AG04450 (cell line): ENCODE measurements at regions of chr7 and their contacts with region 1.

Region 1: GRCh38 chr7:100132697-100133151 is 6.0 kb downstream of the MBLAC1 start:
- DNase-seq: no peak
- H3K4me3 ChIP-seq: no peak overlapping the region
- H3K27ac ChIP-seq: no peak overlapping the region
- H3K27me3 ChIP-seq: no peaks in the 10 kb centered on the region
- CTCF ChIP-seq: peak; percentile 98

Region 2: GRCh38 chr7:99928994-99929729 is 203.6 kb before region 1 on chr7 and contains the start of gene GJC3:
- CTCF ChIA-PET with region 1: no interaction called
- POLR2A ChIA-PET with region 1: no interaction called
- DNase-seq: no peak
- H3K4me3 ChIP-seq: peak within 1 kb of the TSS; percentile 31
- H3K27ac ChIP-seq: no peak within 1 kb of the TSS
- H3K27me3 ChIP-seq: peaks cover 14% of the 10 kb centered on the region
- CTCF ChIP-seq: peak; percentile 29
- polyA plus RNA-seq, gene GJC3: not detected in 2 replicates

Region 3: DNA sequence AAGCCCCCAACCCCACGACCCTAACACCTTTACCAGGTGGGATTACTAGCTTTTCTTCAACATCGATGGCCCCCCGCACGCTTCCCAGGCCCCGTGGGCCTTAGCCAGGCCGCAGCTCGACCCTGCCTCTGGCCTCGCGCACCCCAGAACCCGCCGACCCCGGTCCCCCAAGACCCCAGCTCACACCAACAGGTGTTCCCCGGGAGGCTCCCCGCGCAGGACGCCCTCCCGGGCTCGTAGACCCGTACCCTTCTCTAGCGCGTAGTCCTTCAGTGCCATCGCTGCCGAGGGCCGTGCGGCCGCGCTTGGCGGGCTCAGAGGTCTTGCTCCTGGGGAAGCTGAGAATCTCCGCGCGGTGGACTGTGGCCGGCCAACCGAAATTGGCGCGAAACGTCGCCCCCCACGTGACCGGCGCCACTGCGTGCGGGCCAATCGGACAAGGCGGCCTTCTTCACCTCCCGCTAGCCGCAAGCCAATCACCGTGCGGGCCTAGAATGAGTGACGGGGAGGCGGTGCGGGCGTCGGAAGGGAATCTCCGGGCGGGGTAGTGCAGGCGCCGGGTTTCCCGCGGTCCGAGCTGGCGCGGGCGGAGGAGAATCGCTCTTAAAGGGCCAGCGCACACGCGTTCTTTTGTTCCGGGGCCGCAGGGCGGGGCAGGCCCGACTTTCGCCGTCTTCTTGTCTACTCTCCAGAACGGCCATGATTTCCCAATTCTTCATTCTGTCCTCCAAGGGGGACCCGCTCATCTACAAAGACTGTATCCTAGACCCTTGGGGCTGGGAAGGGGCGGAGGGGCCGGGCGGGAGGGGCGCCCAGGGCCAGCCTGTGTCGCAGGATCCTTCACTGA is 31.5 kb before region 1 on chr7 and contains the starts of genes AP4M1 and MCM7:
- CTCF ChIA-PET with region 1: interaction called, 13 read pairs
- POLR2A ChIA-PET with region 1: interaction called, 4 read pairs
- DNase-seq: peak; percentile 98
- H3K4me3 ChIP-seq: peak within 1 kb of the TSS; percentile 77
- H3K27ac ChIP-seq: peak within 1 kb of the TSS; percentile 88
- H3K27me3 ChIP-seq: no peaks in the 10 kb centered on the region
- CTCF ChIP-seq: no peak
- polyA plus RNA-seq, gene AP4M1: 25.4 and 26.1 TPM in 2 replicates
- polyA plus RNA-seq, gene MCM7: 39.5 and 44.2 TPM in 2 replicates

Region 4: GRCh38 chr7:100148225-100148558 is 15.5 kb after region 1 on chr7:
- CTCF ChIA-PET with region 1: interaction called, 32 read pairs
- POLR2A ChIA-PET with region 1: interaction called, 4 read pairs
- DNase-seq: no peak
- H3K4me3 ChIP-seq: peak overlapping the region; percentile 43
- H3K27ac ChIP-seq: no peak overlapping the region
- H3K27me3 ChIP-seq: no peaks in the 10 kb centered on the region
- CTCF ChIP-seq: no peak

Region 5: DNA sequence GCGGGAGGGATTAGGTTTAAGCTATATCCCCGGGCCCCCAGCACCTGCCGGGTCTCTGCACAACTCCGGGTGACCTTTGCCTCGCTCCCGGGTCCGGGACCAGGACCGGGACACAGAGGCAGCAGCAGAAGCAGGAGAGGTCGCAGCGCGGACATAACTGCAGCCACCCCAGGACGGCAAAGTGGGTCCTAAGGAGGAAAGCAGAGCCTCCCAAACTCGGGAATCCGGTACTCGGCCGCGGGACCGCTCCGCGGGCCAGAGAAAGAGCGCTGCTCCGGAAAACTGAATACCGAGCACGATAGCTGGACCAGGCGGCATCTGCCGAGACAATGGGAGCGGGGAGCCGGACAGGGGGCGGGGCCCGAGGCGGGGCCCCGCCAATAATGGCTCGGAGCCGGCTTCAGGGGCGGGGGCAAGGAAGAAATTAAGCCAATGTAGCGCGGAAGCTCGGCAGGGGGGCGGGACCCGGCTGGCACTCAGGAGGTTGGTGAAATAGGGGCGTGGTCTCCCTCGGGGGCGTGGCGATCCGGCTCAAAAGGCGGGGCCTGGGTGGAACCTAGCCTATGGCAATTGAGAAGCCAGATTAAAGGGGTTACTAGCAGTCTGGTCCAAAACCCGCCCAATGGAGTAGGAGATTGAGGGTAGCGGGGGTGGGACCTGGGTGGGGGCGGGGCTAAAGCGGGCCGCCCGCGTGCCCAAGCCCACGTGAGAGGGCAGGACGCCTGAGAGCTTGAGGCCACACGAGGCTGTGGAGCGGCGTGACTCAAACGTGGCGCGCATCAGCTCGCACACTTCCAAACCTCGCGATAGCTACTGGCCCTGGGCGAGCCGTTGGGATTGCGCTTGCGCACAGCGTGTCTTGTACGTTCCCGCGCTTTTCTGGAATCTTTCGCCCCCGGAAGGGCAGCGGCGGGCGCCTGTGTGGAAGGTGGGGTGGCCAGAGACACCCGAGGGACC is 44.6 kb after region 1 on chr7 and contains the starts of genes GPC2 and STAG3:
- CTCF ChIA-PET with region 1: interaction called, 11 read pairs
- POLR2A ChIA-PET with region 1: no interaction called
- DNase-seq: peak; percentile 91
- H3K4me3 ChIP-seq: peak within 1 kb of the TSS; percentile 92
- H3K27ac ChIP-seq: no peak within 1 kb of the TSS
- H3K27me3 ChIP-seq: no peaks in the 10 kb centered on the region
- CTCF ChIP-seq: no peak
- polyA plus RNA-seq, gene GPC2: 2.6 TPM in 2 replicates
- polyA plus RNA-seq, gene STAG3: 0.15 and 0.22 TPM in 2 replicates

Region 6: DNA sequence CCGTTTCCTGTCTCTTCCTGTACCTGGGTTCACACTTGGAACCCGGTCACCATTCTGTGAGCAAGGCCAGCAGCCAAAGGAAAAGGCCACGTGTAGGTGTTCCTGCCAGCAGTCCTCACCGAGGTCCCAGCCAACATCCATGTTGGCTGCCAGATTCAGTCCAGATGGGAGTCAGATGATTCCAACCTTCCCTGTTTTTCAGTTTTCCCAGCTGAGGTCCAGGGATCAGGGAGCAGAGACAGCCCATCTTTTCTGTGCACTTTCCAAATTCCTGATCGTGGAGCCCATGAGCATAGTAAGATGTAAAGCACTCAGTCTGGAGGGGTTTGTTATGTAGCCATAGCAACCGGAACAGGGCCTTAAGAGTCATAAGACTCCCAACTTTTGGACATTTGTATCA is 83.2 kb after region 1 on chr7:
- CTCF ChIA-PET with region 1: interaction called, 65 read pairs
- POLR2A ChIA-PET with region 1: no interaction called
- DNase-seq: no peak
- H3K4me3 ChIP-seq: no peak overlapping the region
- H3K27ac ChIP-seq: no peak overlapping the region
- H3K27me3 ChIP-seq: peaks cover 2% of the 10 kb centered on the region
- CTCF ChIP-seq: no peak

Region 7: DNA sequence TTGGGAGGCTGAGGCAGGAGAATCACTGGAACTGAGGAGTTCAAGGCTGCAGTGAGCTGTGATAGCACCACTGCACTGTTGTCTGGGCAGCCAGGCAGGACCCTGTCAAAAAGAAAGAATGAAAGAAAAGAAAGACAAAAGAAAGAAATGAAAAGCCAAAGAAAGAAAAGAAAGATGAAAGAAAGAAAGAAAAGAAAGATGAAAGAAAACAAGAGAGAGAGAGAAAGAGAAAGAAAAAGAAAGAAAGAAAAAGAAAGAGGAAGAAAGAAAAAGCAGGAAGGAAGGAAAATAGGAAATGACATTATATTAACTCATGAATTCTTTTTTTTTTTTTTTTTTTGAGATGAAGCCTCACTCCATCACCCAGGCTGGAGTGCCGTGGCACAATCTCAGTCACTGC is 142.4 kb after region 1 on chr7:
- CTCF ChIA-PET with region 1: no interaction called
- POLR2A ChIA-PET with region 1: no interaction called
- DNase-seq: no peak
- H3K4me3 ChIP-seq: no peak overlapping the region
- H3K27ac ChIP-seq: no peak overlapping the region
- H3K27me3 ChIP-seq: no peaks in the 10 kb centered on the region
- CTCF ChIP-seq: no peak

Region 8: GRCh38 chr7:100407285-100408180 is 274.8 kb after region 1 on chr7:
- CTCF ChIA-PET with region 1: interaction called, 11 read pairs
- POLR2A ChIA-PET with region 1: no interaction called
- DNase-seq: peak; percentile 41
- H3K4me3 ChIP-seq: no peak overlapping the region
- H3K27ac ChIP-seq: no peak overlapping the region
- H3K27me3 ChIP-seq: peaks cover 29% of the 10 kb centered on the region
- CTCF ChIP-seq: peak; percentile 83